Tibial artery (tissue), 4 donors: ENCODE measurements at regions of chr2 and their contacts with region 1.

Region 1: GRCh38 chr2:172162739-172163336 is 60.1 kb upstream of the DLX2 start:
- DNase-seq: no peak
- H3K4me3 ChIP-seq: no peak overlapping the region
- H3K27ac ChIP-seq: no peak overlapping the region
- H3K4me1 ChIP-seq: no peaks in the 10 kb centered on the region
- H3K27me3 ChIP-seq: peaks cover 0 to 9% of the 10 kb centered on the region in 2 donors
- CTCF ChIP-seq: no peak

Region 2: GRCh38 chr2:174051741-174052583 is 1889.1 kb after region 1 on chr2:
- intact Hi-C with region 1: loop called (anchors 5 kb)
- DNase-seq: no peak
- H3K4me3 ChIP-seq: no peak overlapping the region
- H3K27ac ChIP-seq: no peak overlapping the region
- H3K4me1 ChIP-seq: no peaks in the 10 kb centered on the region
- H3K27me3 ChIP-seq: no peaks in the 10 kb centered on the region
- CTCF ChIP-seq: no peak